Mammary epithelial cell (primary cell): ENCODE measurements at regions of chr15 and their contacts with region 1.

Region 1: GRCh38 chr15:51874751-51875528 is 45.5 kb downstream of the TMOD3 start:
- DNase-seq: peak; percentile 97
- H3K4me3 ChIP-seq: peak overlapping the region in 1 of 3 experiments; percentile 6
- H3K27ac ChIP-seq: peak overlapping the region; percentile 100
- H3K4me1 ChIP-seq: peaks cover 43% of the 10 kb centered on the region
- H3K27me3 ChIP-seq: no peaks in the 10 kb centered on the region
- CTCF ChIP-seq: no peak

Region 2: DNA sequence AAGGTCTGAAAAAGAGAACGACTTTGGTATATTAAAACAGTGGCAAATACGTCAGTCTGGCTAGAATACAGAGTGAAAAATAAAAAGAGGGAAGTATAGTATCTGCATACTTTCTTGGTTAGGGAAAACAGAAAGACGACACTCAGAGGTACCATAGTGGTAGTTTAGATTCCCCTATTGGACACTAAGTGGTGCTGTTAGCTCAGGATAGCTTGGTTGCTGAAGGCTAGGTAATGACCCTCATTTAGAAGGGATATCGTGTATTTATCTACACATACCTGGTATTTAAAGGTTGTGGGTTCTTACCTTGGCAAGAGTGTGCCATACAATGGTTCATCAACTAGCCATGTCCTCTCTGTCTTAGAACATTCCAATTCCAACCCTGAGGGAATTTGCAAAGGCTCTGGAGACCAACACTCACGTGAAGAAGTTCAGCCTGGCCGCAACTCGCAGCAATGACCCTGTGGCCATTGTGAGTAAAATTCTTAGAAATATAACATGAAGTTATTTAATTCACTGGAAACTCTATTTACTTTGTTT is 92.5 kb before region 1 on chr15:
- CTCF ChIA-PET with region 1: no interaction called
- dilution Hi-C with region 1: no loop called
- in situ Hi-C with region 1: no loop called
- intact Hi-C with region 1: loop called (anchors 5 kb)
- DNase-seq: no peak
- H3K4me3 ChIP-seq: no peak overlapping the region
- H3K27ac ChIP-seq: no peak overlapping the region
- H3K4me1 ChIP-seq: peaks cover 10% of the 10 kb centered on the region
- H3K27me3 ChIP-seq: no peaks in the 10 kb centered on the region
- CTCF ChIP-seq: peak; percentile 50 to 60

Region 3: GRCh38 chr15:51829360-51830275 is 45.3 kb before region 1 on chr15 and contains the start of gene TMOD3:
- CTCF ChIA-PET with region 1: interaction called, 22 read pairs
- dilution Hi-C with region 1: no loop called
- in situ Hi-C with region 1: no loop called
- intact Hi-C with region 1: loop called (anchors 1 kb)
- DNase-seq: peak; percentile 86
- H3K4me3 ChIP-seq: peak within 1 kb of the TSS; percentile 92 to 98 (median 92)
- H3K27ac ChIP-seq: peak within 1 kb of the TSS; percentile 88
- H3K4me1 ChIP-seq: peaks cover 42% of the 10 kb centered on the region
- H3K27me3 ChIP-seq: no peaks in the 10 kb centered on the region
- CTCF ChIP-seq: no peak
- total RNA-seq, gene TMOD3: 50.3 to 124 TPM

Region 4: DNA sequence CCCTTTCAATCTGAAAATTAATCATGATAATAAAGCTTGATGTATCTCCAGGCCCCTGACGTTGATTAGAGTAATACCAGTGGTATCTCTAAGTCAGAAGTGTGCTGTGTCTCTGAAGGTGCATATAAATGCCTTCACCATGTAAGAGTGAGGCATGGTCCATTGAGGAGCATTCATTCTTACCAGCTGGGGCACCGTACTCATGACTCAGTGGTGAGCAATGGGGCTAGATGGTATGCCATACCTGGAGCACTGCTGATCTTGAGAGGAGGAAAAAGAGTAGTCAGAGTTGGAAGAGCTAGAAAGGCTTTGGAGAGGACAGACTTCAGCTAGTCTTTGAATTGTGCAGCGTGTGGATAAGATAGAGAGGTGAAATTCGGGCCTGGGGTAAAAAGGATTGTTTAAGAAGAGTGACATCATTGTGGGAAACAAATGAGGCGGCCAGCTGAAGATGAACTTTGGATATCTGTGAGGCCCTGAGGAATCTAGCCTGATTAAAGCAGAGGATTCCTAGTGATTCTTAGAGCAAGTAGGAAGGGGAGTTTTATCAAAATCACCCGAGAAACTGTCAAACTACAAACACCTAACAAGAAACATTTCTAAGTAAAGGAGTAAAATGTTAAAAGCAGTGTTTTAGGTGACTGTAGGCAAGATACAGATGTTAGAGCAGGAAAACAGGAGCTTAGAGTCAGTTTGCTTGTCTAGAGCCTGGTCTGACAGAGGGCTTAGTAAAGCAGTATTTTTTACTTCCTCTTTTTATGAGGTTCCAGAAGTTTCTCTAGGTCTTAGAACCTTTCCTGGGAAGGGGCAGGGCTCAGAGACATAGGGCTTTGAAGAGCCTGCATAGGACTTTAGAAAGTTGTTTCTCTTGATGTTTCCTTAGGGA is 31.8 kb before region 1 on chr15:
- CTCF ChIA-PET with region 1: no interaction called
- dilution Hi-C with region 1: no loop called
- in situ Hi-C with region 1: no loop called
- intact Hi-C with region 1: loop called (anchors 1 kb)
- DNase-seq: peak; percentile 94
- H3K4me3 ChIP-seq: no peak overlapping the region
- H3K27ac ChIP-seq: peak overlapping the region; percentile 83
- H3K4me1 ChIP-seq: peaks cover 60% of the 10 kb centered on the region
- H3K27me3 ChIP-seq: no peaks in the 10 kb centered on the region
- CTCF ChIP-seq: no peak

Region 5: DNA sequence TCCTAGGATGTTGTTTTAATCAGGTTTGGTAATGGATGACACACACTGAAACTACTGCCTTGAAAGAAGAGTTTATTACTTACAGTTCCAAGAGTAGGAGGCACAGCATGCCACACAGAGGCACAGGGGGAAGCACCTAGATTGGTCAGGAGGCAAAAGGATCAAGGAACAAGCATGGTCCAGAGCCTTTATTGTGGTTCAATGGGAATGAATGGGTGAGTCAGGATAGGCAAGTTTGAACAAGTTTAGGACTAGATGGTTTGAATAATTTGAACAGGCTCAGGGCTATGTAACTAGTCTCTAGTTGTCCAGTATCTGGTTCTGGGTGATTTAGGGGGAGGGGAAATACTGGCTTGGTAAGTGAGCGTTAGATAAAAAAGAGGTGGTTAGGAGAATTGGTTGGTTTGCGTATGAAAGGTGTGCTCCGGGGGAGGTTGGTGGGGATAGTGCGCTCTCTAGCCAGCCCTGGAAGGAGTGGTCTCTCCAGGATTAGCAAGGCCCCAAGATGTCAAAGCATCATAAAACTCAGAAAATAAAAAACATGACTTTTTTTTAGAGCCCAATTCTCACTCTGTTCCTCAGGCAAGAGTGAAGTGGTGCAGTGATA is 10.4 kb before region 1 on chr15:
- CTCF ChIA-PET with region 1: no interaction called
- dilution Hi-C with region 1: no loop called
- in situ Hi-C with region 1: no loop called
- intact Hi-C with region 1: loop called (anchors 1 kb)
- DNase-seq: peak; percentile 100
- H3K4me3 ChIP-seq: no peak overlapping the region
- H3K27ac ChIP-seq: peak overlapping the region; percentile 94
- H3K4me1 ChIP-seq: peaks cover 55% of the 10 kb centered on the region
- H3K27me3 ChIP-seq: no peaks in the 10 kb centered on the region
- CTCF ChIP-seq: no peak

Region 6: GRCh38 chr15:51907136-51907914 is 32.4 kb after region 1 on chr15:
- CTCF ChIA-PET with region 1: interaction called, 12 read pairs
- dilution Hi-C with region 1: no loop called
- in situ Hi-C with region 1: no loop called
- intact Hi-C with region 1: no loop called
- DNase-seq: peak; percentile 85
- H3K4me3 ChIP-seq: no peak overlapping the region
- H3K27ac ChIP-seq: no peak overlapping the region
- H3K4me1 ChIP-seq: peaks cover 10% of the 10 kb centered on the region
- H3K27me3 ChIP-seq: no peaks in the 10 kb centered on the region
- CTCF ChIP-seq: peak; percentile 26 to 44